ENCODE measurements at regions of chr12 and their contacts with region 1.

Region 1: GRCh38 chr12:6092784-6093722 is 31.4 kb downstream of the VWF start:
- DNase-seq: peak; percentile 92
- H3K4me3 ChIP-seq: no peak overlapping the region
- H3K27ac ChIP-seq: peak overlapping the region; percentile 60
- H3K4me1 ChIP-seq: peaks cover 87% of the 10 kb centered on the region
- H3K27me3 ChIP-seq: no peaks in the 10 kb centered on the region
- CTCF ChIP-seq: peak in 1 of 2 donors; percentile 14
- POLR2A ChIP-seq: no peak

Region 2: DNA sequence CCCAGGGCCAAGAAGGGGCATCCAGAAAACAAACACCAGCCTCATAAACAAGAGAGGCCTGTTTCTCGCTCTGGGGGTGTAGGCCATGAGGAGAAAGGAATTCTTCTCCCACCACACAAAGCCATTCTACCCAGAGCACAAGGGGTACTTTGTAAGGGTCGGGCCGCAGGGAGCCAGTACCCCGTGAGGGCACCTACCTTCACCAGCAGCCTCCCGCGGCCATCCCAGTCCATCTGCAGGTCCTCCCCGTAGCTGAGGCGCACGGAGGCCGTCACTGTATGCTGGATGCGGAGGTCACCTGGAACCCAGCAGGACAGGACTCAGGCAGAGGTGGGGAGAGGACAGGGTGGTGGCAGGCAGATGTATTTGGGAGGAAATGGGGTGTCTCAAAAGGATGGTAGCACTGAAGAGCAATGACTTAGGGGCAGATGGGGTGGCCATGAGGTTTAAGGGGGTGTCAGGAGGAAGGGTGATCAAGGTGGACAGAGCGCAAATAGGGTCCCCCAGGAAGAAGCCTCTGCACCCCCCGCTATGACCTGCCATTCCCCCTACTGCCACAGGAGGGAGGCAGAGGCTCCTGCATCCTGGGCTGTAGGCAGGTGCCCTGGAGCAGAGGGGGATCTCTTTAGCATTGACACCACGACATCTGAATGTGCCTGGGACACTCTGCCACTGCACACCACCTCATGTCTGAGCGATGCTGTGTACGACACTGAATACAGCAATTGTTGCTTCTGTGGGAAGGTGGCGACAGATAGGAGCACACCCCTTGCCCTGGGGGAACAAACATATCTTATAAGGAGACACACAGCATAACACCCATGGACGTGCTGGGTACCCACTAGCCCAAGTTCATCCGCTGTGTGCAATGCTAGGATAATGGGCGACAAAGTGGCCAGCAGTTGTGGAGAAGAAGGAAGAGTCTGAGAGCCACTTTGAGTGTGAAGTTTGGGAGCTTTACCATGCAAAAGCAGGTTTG is 30.0 kb before region 1 on chr12:
- CTCF ChIA-PET with region 1: interaction called, 7 read pairs
- POLR2A ChIA-PET with region 1: interaction called, 6 read pairs
- dilution Hi-C with region 1: no loop called
- intact Hi-C with region 1: loop called (anchors 2 kb)
- DNase-seq: no peak
- H3K4me3 ChIP-seq: no peak overlapping the region
- H3K27ac ChIP-seq: no peak overlapping the region
- H3K4me1 ChIP-seq: peaks cover 14% of the 10 kb centered on the region
- H3K27me3 ChIP-seq: no peaks in the 10 kb centered on the region
- CTCF ChIP-seq: peak; percentile 61 to 83
- POLR2A ChIP-seq: peak; percentile 42